GM12878 (cell line): ENCODE measurements at regions of chr2 and their contacts with region 1.

Region 1: GRCh38 chr2:110860630-110861029 is 128.3 kb downstream of the ACOXL start:
- DNase-seq: no peak
- ATAC-seq: no peak
- H3K4me3 ChIP-seq: no peak overlapping the region
- H3K27ac ChIP-seq: no peak overlapping the region
- H3K4me1 ChIP-seq: peaks cover 17% of the 10 kb centered on the region
- H3K27me3 ChIP-seq: peaks cover 0 to 1% of the 10 kb centered on the region in 2 experiments; a peak in 1 of 4 replicates
- CTCF ChIP-seq: no peak
- EP300 ChIP-seq: no peak
- POLR2A ChIP-seq: no peak
- RAD21 ChIP-seq: no peak

Region 2: GRCh38 chr2:110221938-110222337 is 638.7 kb before region 1 on chr2:
- CTCF ChIA-PET with region 1: no interaction called
- POLR2A ChIA-PET with region 1: no interaction called
- RAD21 ChIA-PET with region 1: no interaction called
- SMC1A ChIA-PET with region 1: no interaction called
- in situ Hi-C with region 1: no loop called
- intact Hi-C with region 1: no loop called
- DNase-seq: no peak
- ATAC-seq: no peak
- H3K4me3 ChIP-seq: no peak overlapping the region
- H3K27ac ChIP-seq: no peak overlapping the region
- H3K4me1 ChIP-seq: no peaks in the 10 kb centered on the region
- H3K27me3 ChIP-seq: no peaks in the 10 kb centered on the region; a peak in 2 of 4 replicates
- CTCF ChIP-seq: no peak
- EP300 ChIP-seq: no peak
- POLR2A ChIP-seq: no peak
- RAD21 ChIP-seq: no peak

Region 3: DNA sequence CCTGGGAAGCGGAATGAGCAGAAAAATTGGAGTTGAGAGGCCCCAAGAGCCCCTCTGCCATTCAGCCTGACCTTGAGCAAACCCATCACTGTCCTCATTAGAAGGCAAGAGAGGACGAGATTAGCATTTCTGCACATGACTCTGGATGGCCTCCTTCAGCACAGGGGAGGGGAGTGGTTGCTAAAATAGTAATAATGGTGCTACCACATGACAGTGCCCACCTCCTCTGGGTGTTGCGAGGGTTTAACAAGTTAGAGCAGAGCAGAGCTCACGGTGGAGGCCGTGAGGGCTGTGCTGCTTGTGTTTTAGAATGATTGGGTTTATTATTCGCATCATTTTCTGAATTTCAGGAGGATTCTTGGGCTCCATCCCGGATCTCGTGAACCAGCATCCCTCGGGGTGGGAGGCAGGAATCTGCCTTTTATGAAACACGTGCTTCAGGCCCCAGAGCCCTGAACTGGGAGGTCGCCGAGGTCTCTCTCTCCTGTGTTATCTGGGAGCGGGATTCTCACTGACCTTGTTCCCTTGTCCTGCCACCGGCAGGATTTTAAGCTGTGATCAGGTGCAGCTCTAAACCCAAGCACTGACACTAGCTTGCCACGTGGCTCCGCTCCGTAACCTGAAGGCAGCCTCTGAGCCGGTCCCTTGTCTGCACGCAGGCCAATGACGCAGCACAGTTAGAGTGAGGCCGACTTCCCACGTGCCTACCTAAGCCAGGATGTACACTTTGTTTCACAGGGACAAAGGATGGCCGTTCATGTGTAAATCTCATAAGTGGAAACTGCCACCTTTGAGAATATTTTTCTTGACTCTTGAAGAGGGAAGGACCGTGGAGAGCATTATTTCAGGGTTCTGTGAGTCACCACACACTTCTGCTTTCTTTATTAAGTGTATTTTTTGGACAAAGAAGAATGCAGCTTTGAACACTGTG is 14.1 kb after region 1 on chr2:
- CTCF ChIA-PET with region 1: interaction called, 11 read pairs
- POLR2A ChIA-PET with region 1: no interaction called
- RAD21 ChIA-PET with region 1: interaction called, 3 read pairs
- SMC1A ChIA-PET with region 1: interaction called, 4 read pairs
- in situ Hi-C with region 1: no loop called
- intact Hi-C with region 1: no loop called
- DNase-seq: peak; percentile 75
- ATAC-seq: peak; percentile 79
- H3K4me3 ChIP-seq: no peak overlapping the region
- H3K27ac ChIP-seq: 0 out of 2 replicates have a peak overlapping the region, but pooled peaks have one; percentile 22
- H3K4me1 ChIP-seq: peaks cover 46% of the 10 kb centered on the region
- H3K27me3 ChIP-seq: no peaks in the 10 kb centered on the region
- CTCF ChIP-seq: no peak
- EP300 ChIP-seq: no peak
- POLR2A ChIP-seq: no peak
- RAD21 ChIP-seq: no peak

Region 4: GRCh38 chr2:111134055-111134454 is 273.4 kb after region 1 on chr2:
- CTCF ChIA-PET with region 1: no interaction called
- POLR2A ChIA-PET with region 1: no interaction called
- RAD21 ChIA-PET with region 1: no interaction called
- SMC1A ChIA-PET with region 1: no interaction called
- in situ Hi-C with region 1: no loop called
- intact Hi-C with region 1: no loop called
- DNase-seq: no peak
- ATAC-seq: peak; percentile 45; the same call in 1 of the 3 replicates
- H3K4me3 ChIP-seq: no peak overlapping the region
- H3K27ac ChIP-seq: no peak overlapping the region
- H3K4me1 ChIP-seq: no peaks in the 10 kb centered on the region
- H3K27me3 ChIP-seq: no peaks in the 10 kb centered on the region; a peak in 1 of 4 replicates
- CTCF ChIP-seq: 0 out of 6 replicates have a peak, but pooled peaks of 1 of the 3 experiments have one; percentile 8
- EP300 ChIP-seq: no peak
- POLR2A ChIP-seq: no peak
- RAD21 ChIP-seq: no peak